ENCODE measurements at regions of chr6 and their contacts with region 1.

Region 1: GRCh38 chr6:53410508-53411258 is 61.9 kb upstream of the ELOVL5 start:
- DNase-seq: peak; percentile 68
- ATAC-seq: peak; percentile 93
- H3K4me3 Mint-ChIP-seq: no peak overlapping the region
- H3K27ac Mint-ChIP-seq: no peak overlapping the region
- H3K4me1 Mint-ChIP-seq: peaks cover 4% of the 10 kb centered on the region
- H3K27me3 Mint-ChIP-seq: peaks cover 5% of the 10 kb centered on the region

Region 2: GRCh38 chr6:53171605-53172446 is 238.9 kb before region 1 on chr6:
- CTCF ChIA-PET with region 1: interaction called, 31 read pairs
- DNase-seq: peak; percentile 93
- ATAC-seq: peak; percentile 90
- H3K4me3 Mint-ChIP-seq: no peak overlapping the region
- H3K27ac Mint-ChIP-seq: no peak overlapping the region
- H3K4me1 Mint-ChIP-seq: no peaks in the 10 kb centered on the region
- H3K27me3 Mint-ChIP-seq: peaks cover 3% of the 10 kb centered on the region